ENCODE measurements at regions of chr7 and their contacts with region 1.

Region 1: GRCh38 chr7:42940985-42941847 is 9.0 kb downstream of the MRPL32 start:
- DNase-seq: peak; percentile 52 to 66 (median 56)
- H3K4me3 ChIP-seq: no peak overlapping the region
- H3K4me3 Mint-ChIP-seq: no peak overlapping the region
- H3K27ac ChIP-seq: no peak overlapping the region
- H3K27ac Mint-ChIP-seq: no peak overlapping the region
- H3K4me1 ChIP-seq: no peaks in the 10 kb centered on the region
- H3K4me1 Mint-ChIP-seq: peaks cover 8 to 25% (median 15%) of the 10 kb centered on the region in 4 donors
- H3K27me3 ChIP-seq: no peaks in the 10 kb centered on the region
- H3K27me3 Mint-ChIP-seq: no peaks in the 10 kb centered on the region

Region 2: DNA sequence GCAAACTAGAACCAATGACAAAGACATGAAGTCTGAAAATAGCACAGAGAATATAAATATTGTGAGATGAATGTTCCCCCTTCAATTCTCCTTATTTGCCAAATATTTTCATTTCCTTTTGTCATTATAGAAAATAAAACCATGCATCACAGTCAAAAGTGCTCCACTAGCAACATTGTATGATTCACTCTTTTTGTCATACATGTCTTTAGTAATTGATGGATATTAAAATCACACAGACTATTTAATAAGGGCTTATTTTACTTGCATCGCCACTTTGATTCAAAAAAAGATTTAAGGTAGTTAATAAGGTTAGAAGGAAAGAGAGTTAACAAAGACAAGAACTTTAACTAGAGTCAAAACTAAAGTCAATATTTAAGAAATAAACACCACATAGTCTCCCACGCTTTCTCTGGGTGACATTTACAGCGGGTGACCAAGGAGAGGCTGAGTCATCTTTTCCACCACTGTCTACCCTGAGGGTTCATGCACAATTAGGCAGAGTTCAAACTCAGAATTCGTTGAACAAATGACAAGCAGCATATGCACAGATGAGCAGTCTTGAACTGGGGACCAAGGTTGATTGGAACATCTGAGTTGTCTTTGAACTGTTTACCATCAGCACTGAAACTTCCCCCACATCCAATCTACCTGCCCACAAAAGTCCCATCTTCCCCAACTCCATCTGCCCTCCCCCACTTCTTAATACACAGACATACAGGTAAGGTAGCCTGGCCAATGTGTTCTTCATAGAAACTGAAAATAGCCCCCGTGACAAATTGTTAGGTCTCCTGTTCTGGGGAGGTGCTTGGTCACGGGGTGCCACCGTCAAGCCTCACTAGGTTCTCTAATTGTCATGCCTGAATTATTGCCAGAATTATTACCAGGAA is 71.8 kb before region 1 on chr7:
- CTCF ChIA-PET with region 1: no interaction called
- POLR2A ChIA-PET with region 1: no interaction called
- intact Hi-C with region 1: no loop called
- DNase-seq: no peak
- H3K4me3 ChIP-seq: no peak overlapping the region
- H3K4me3 Mint-ChIP-seq: no peak overlapping the region
- H3K27ac ChIP-seq: no peak overlapping the region
- H3K27ac Mint-ChIP-seq: no peak overlapping the region
- H3K4me1 ChIP-seq: no peaks in the 10 kb centered on the region
- H3K4me1 Mint-ChIP-seq: peaks cover 0 to 8% (median 2%) of the 10 kb centered on the region in 4 donors
- H3K27me3 ChIP-seq: no peaks in the 10 kb centered on the region
- H3K27me3 Mint-ChIP-seq: peaks cover 2 to 3% of the 10 kb centered on the region in 2 donors

Region 3: GRCh38 chr7:42953994-42954393 is 12.8 kb after region 1 on chr7:
- CTCF ChIA-PET with region 1: interaction called, 13 read pairs
- POLR2A ChIA-PET with region 1: no interaction called
- intact Hi-C with region 1: no loop called
- DNase-seq: no peak
- H3K4me3 ChIP-seq: no peak overlapping the region
- H3K4me3 Mint-ChIP-seq: no peak overlapping the region
- H3K27ac ChIP-seq: no peak overlapping the region
- H3K27ac Mint-ChIP-seq: no peak overlapping the region
- H3K4me1 ChIP-seq: no peaks in the 10 kb centered on the region
- H3K4me1 Mint-ChIP-seq: no peaks in the 10 kb centered on the region
- H3K27me3 ChIP-seq: no peaks in the 10 kb centered on the region
- H3K27me3 Mint-ChIP-seq: peaks cover 0 to 3% of the 10 kb centered on the region in 2 donors

Region 4: GRCh38 chr7:43721193-43721806 is 780.1 kb after region 1 on chr7:
- CTCF ChIA-PET with region 1: interaction called, 19 read pairs
- POLR2A ChIA-PET with region 1: no interaction called
- intact Hi-C with region 1: no loop called
- DNase-seq: peak in 4 of 5 donors; percentile 54 to 59 (median 58)
- H3K4me3 ChIP-seq: no peak overlapping the region
- H3K4me3 Mint-ChIP-seq: no peak overlapping the region
- H3K27ac ChIP-seq: no peak overlapping the region
- H3K27ac Mint-ChIP-seq: peak overlapping the region in 3 of 7 donors; percentile 14 to 71 (median 47)
- H3K4me1 ChIP-seq: no peaks in the 10 kb centered on the region
- H3K4me1 Mint-ChIP-seq: peaks cover 23 to 46% (median 34%) of the 10 kb centered on the region in 4 donors
- H3K27me3 ChIP-seq: no peaks in the 10 kb centered on the region
- H3K27me3 Mint-ChIP-seq: no peaks in the 10 kb centered on the region

Measured in CD4-positive, alpha-beta memory T cell (primary cell).